Mammary epithelial cell (primary cell): ENCODE measurements at regions of chr1 and their contacts with region 1.

Region 1: DNA sequence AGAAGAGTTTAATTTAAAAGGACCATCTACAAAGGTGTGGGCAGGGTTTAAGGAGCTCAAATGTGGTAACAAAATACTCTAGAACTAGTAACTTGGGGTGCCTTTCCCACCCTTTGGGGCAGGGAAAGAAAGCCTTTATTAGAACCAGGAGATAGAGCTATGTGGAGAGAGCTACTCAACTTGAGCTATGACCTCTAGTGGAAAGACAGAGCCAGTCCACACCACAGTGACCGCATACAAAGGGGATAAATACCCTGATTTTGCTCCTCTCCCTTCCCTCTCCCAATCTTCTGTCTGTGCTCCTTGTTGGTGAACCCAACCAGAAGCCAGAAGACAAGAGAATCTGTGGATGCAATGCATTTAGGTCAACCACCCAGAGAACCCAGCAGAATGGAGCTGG is 54.4 kb upstream of the JAK1 start:
- DNase-seq: no peak
- H3K4me3 ChIP-seq: no peak overlapping the region
- H3K27ac ChIP-seq: no peak overlapping the region
- H3K4me1 ChIP-seq: no peaks in the 10 kb centered on the region
- H3K27me3 ChIP-seq: no peaks in the 10 kb centered on the region
- CTCF ChIP-seq: peak; percentile 19 to 44

Region 2: DNA sequence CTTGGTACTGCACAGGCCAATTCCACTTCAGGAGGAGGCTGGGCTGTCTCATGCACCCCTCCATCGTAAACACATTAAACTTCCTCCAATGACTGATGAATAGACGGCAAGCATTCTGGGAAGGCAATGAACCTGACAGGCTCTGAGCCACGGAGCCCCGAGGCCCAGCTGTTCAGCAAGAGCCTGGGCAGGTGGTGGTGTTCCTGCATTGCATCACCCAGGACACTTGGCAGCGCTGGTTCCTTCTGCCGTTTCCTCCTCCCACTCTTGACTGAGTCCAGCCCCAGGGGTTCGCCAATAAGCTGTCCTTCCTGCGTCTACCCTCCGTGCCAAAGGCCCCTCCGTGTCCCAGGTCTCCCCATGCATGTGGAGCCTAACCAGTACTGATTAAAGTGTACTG is 164.2 kb before region 1 on chr1:
- CTCF ChIA-PET with region 1: no interaction called
- dilution Hi-C with region 1: no loop called
- in situ Hi-C with region 1: no loop called
- intact Hi-C with region 1: loop called (anchors 5 kb)
- DNase-seq: peak; percentile 35
- H3K4me3 ChIP-seq: no peak overlapping the region
- H3K27ac ChIP-seq: no peak overlapping the region
- H3K4me1 ChIP-seq: peaks cover 4% of the 10 kb centered on the region
- H3K27me3 ChIP-seq: no peaks in the 10 kb centered on the region
- CTCF ChIP-seq: peak in 1 of 2 donors; percentile 18